OCI-LY7 (cell line): ENCODE measurements at regions of chr9 and their contacts with region 1.

Region 1: GRCh38 chr9:120928483-120929228 is 2.1 kb upstream of the TRAF1 start:
- DNase-seq: peak; percentile 87
- H3K4me3 ChIP-seq: peak overlapping the region; percentile 74
- H3K27ac ChIP-seq: peak overlapping the region; percentile 96
- H3K4me1 ChIP-seq: peaks cover 97% of the 10 kb centered on the region
- CTCF ChIP-seq: no peak

Region 2: GRCh38 chr9:120801441-120801840 is 127.2 kb before region 1 on chr9:
- CTCF ChIA-PET with region 1: no interaction called
- POLR2A ChIA-PET with region 1: no interaction called
- intact Hi-C with region 1: no loop called
- DNase-seq: no peak
- H3K4me3 ChIP-seq: no peak overlapping the region
- H3K27ac ChIP-seq: no peak overlapping the region
- H3K4me1 ChIP-seq: no peaks in the 10 kb centered on the region
- CTCF ChIP-seq: no peak

Region 3: DNA sequence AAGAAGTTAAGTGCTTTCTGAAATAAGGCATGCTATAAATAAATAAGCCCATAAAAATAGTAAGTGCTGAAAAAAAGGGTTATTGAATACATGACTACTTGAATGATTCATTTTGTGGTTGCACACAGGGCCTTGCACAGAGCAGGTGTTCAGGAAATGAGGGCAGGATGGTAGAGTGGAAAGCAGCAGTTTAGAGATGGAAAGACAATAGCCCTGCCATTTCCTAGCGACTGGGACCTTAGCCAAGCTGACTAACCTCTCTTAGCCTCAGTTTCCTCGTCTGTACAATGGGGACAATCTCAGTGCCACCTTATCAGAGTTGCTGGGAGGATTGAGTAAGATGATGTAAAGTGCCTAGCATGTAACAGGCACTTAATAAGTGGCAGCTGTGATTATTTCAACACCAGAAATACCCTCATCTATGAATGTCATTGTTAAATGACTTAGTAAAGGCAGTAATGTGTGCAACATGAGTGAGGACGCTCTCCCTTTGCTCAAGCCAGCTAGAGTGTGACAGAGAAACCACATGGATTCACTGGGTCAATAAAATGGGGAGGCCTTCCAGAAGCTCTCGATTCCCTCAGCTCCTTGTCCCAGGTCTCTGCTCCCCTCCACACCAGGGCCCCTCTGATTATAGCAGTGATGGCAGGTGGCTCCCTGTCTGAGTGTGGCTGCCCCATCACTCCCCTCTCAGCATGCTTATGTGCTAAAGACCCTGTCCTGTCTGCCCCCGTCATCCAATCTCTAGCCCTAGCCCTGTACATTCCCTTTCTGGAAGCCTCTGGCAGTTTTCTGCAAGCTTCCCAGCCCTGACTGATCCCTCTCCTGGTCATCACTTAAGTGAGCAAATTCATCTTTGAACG is 35.7 kb before region 1 on chr9:
- CTCF ChIA-PET with region 1: interaction called, 4 read pairs
- POLR2A ChIA-PET with region 1: interaction called, 372 read pairs
- intact Hi-C with region 1: loop called (anchors 1 kb)
- DNase-seq: peak; percentile 97
- H3K4me3 ChIP-seq: peak overlapping the region; percentile 7
- H3K27ac ChIP-seq: peak overlapping the region; percentile 98
- H3K4me1 ChIP-seq: peaks cover 95% of the 10 kb centered on the region
- CTCF ChIP-seq: no peak

Region 4: GRCh38 chr9:120916588-120916987 is 12.1 kb before region 1 on chr9:
- CTCF ChIA-PET with region 1: interaction called, 4 read pairs
- POLR2A ChIA-PET with region 1: interaction called, 15 read pairs
- intact Hi-C with region 1: no loop called
- DNase-seq: no peak
- H3K4me3 ChIP-seq: no peak overlapping the region
- H3K27ac ChIP-seq: no peak overlapping the region
- H3K4me1 ChIP-seq: peaks cover 31% of the 10 kb centered on the region
- CTCF ChIP-seq: no peak